ENCODE measurements at regions of chr13 and their contacts with region 1.

Region 1: GRCh38 chr13:30395192-30396084 is 26.9 kb upstream of the UBE2L5 start:
- DNase-seq: peak; percentile 88
- H3K4me3 ChIP-seq: peak overlapping the region; percentile 58
- H3K27ac ChIP-seq: peak overlapping the region; percentile 96
- H3K27me3 ChIP-seq: peaks cover 3% of the 10 kb centered on the region
- CTCF ChIP-seq: no peak

Region 2: GRCh38 chr13:30306762-30307193 is 88.7 kb before region 1 on chr13:
- CTCF ChIA-PET with region 1: interaction called, 3 read pairs
- POLR2A ChIA-PET with region 1: interaction called, 18 read pairs
- DNase-seq: peak; percentile 78
- H3K4me3 ChIP-seq: peak overlapping the region; percentile 90
- H3K27ac ChIP-seq: no peak overlapping the region
- H3K27me3 ChIP-seq: no peaks in the 10 kb centered on the region
- CTCF ChIP-seq: no peak

Region 3: DNA sequence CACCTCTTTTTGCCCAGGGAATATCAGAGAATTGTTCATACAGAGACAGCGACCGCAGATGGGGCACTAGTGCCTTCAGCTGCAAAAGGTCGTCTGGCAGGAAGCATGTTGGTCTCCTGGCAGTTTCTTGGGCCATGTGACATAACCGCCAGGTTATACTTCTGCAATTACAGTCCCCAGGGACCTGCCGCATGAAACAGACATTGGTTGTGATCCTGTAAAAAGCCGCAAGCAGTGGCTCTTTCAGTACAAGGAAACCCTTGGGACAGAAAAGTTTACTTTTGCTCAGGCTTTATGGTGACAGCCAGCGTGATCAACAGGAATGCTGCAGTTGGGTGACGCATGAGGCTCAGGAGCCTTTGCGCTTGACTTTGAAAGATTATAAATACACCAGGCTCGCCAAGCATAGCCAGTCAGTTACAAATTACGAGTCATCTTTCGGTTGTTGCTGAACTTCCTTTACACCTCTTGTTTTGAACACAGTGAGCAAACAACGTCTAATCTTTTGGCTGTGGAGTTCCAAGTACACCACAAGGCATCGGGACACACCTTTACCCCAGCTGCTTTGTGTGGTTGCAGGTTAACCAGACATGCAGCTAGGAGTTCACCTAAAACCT is 23.7 kb before region 1 on chr13:
- CTCF ChIA-PET with region 1: no interaction called
- POLR2A ChIA-PET with region 1: no interaction called
- DNase-seq: no peak
- H3K4me3 ChIP-seq: no peak overlapping the region
- H3K27ac ChIP-seq: peak overlapping the region; percentile 11
- H3K27me3 ChIP-seq: no peaks in the 10 kb centered on the region
- CTCF ChIP-seq: no peak

Region 4: DNA sequence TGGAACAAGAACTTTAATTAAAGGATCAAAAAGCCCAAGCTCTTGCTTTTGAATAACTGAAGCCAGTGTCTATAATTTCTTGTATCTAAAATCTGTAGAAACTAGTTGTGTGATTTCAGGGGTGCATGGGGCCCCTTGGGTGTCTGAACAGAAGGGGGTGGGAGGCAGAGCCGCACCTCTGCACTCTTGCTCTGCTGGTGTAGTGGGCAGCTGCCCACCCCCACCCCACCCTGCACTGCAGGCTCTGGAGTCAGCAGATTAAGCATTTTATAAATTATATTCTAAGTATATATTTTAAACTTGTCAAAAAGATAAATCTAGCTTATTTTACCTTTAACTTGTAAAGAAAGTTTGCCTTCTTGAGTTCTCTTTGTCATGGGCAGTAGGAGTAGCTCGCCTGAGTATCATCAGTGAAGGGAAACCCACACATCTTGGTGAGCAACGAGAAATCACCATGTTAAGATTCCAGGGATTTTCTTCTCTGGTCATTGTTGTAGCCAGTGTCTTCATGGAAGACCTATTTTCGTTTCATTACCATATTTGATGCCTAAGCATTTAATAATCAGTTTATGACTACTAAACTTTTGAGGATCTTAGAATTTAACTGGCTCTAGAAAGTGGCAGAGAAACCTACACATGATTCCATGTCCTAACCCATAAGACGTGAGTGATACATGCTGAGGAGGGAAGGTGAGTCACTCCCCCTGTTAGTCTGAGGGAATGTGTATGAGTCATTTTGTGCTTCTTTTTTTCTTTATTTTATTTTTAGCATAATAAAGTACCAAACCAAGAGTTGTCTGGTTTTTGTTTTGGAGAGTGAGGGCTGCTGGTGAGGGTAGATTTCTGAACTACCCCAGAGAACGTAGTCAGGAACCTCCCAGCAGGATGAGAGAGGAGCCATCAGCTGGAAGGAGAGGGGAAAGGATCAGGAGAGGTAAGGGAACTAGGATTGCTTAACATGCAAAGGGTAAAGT is 34.6 kb after region 1 on chr13:
- CTCF ChIA-PET with region 1: no interaction called
- POLR2A ChIA-PET with region 1: no interaction called
- DNase-seq: peak; percentile 65
- H3K4me3 ChIP-seq: no peak overlapping the region
- H3K27ac ChIP-seq: peak overlapping the region; percentile 73
- H3K27me3 ChIP-seq: no peaks in the 10 kb centered on the region
- CTCF ChIP-seq: no peak

Region 5: DNA sequence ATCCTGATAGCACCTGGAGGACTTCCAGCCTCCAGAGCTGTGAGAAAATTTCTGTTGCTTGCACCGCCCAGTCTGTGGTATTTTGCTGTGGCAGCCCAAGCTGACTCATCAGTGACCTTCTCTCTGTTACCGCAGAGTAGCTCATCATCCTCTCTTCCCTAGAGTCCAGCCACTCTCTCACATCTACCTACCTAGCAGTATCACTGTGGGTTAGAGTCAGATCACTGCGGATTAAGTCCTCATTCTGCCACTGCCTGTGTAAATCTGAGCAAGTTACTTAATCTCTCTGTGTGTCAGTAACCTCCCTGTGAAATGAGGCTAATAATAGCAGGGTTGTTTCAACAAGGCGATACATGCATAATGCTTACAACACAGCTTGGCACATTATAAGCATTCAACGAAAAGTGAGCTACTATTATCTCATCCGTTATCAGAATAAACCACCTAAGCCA is 182.0 kb after region 1 on chr13:
- CTCF ChIA-PET with region 1: no interaction called
- POLR2A ChIA-PET with region 1: interaction called, 12 read pairs
- DNase-seq: peak; percentile 59
- H3K4me3 ChIP-seq: no peak overlapping the region
- H3K27ac ChIP-seq: no peak overlapping the region
- H3K27me3 ChIP-seq: no peaks in the 10 kb centered on the region
- CTCF ChIP-seq: no peak

Measured in AG04450 (cell line).